Posterior vena cava (tissue), 2 donors: ENCODE measurements at regions of chr1 and their contacts with region 1.

Region 1: DNA sequence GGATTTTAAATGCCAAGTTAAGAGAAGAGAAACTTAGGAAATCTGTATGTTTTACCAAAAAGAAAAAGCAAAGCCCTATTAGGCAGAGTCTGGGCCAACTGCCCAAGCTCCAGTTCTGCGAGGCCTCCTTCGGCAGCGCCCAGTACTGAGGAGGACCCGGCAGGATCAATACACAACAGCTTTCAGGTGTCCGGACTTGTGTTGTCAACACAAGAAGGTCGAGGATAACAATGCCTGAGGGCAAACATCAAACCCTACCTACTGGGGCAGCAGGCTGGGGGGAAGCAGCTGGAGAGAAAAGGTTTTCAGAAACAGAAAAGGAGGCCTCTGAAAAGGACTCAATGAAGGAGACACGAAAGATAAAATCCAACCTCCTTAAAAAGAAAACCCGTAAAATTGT is 98.1 kb upstream of the GJB5 start:
- DNase-seq: no peak

Region 2: GRCh38 chr1:34612091-34612827 is 44.5 kb before region 1 on chr1:
- intact Hi-C with region 1: no loop called
- DNase-seq: no peak

Region 3: DNA sequence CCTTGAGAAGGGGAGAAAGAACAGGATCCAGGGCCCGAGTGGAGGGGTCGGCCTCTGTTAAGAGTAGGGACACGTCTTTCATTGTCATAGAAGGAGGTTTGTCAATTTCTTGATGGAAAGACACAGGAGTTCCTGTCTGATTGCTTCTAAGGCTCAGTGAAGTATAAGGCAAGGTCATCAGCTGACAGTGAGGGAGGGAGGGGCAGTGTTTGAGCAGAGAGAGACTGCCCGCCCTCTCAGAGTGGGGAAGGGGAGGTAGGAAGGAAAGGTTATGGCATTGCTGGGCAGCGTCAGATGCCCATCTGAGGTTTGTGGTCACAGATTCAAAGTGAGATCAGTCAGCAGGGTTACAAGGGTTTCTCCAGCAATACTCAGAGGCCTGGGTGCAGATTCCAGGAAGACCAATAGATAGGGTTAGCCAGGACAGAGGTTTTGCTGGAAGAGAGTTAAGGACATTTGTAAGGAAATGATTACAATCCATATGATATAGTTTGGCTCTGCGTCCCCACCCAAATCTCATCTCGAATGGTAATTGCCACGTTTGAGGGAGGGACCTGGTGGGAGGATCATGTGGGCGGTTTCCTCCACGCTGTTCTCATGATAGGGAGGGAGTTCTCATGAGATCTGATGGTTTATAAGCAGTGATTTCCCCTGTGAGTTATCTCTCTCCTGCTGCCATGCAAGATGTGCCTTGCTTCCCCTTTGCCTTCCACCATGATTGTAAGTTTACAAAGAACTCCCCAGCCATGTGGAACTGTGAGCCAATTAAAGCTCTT is 29.1 kb before region 1 on chr1:
- intact Hi-C with region 1: no loop called
- DNase-seq: no peak

Region 4: GRCh38 chr1:35220976-35221375 is 564.2 kb after region 1 on chr1:
- intact Hi-C with region 1: loop called in 1 of 2 experiments (anchors 10 kb)
- DNase-seq: no peak